Activated T-helper 1 cell treated with anti-CD3 and anti-CD28 coated beads, Interleukin-12 subunit alpha, Interleukin-12 subunit beta, Interleukin-2, Interleukin-4 antibody, amounts not matched to agents 30 ng/mL and 10 ng/mL and 1 ng/mL, durations not matched to agents 14 hours and 24 hours and 36 hours (primary cell): ENCODE measurements at regions of chr17 and their contacts with region 1.

Region 1: GRCh38 chr17:5097101-5097834 is 14.4 kb downstream of the ZNF232 start:
- DNase-seq: no peak
- H3K4me3 Mint-ChIP-seq: no peak overlapping the region
- H3K27ac Mint-ChIP-seq: no peak overlapping the region
- H3K4me1 Mint-ChIP-seq: no peaks in the 10 kb centered on the region
- H3K27me3 Mint-ChIP-seq: peaks cover 7% of the 10 kb centered on the region

Region 2: DNA sequence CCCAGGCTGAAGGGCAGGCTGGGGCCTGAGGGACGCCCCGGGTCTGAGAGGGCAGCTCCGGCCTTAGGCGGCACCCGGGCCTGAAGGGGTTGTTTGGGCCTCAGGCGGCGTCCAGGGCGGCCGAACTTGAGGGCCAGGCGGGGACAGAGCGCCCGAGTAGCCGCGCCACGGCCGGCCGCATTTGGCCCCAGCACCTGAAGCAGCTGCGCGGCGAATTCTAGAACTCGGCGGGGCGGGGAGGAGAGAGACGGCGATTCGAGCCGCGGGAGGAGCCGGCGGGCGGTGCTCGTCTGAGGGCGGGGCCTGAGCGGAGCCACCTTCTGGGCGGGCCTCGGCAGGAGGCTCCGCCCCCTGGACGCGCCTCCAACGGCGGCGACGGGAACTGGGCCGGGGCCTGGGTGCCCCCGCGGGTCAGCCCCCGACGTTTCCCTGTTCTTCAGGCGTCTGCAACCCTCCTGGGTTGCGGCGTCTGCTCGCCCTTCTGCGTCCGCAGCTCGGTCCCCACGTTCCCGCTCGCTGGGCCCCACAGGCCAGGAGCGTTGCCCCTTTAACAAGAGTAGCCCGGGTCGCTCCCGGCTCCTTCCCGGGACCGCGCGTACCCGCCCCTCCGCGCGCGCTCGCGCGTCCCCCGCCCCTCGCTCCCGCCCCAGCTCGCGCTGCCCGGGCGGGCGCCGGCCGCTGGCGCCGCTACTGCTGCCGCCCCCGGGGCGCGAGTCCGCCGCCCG is 99.8 kb before region 1 on chr17 and contains the starts of genes INCA1 and KIF1C:
- intact Hi-C with region 1: no loop called
- DNase-seq: peak; percentile 89
- H3K4me3 Mint-ChIP-seq: peak within 1 kb of the TSS; percentile 90
- H3K27ac Mint-ChIP-seq: peak within 1 kb of the TSS; percentile 90
- H3K4me1 Mint-ChIP-seq: peaks cover 19% of the 10 kb centered on the region
- H3K27me3 Mint-ChIP-seq: peaks cover 8% of the 10 kb centered on the region
- total RNA-seq, gene INCA1: 0.34 and 0.37 TPM in 2 replicates
- total RNA-seq, gene KIF1C: 68.4 and 71.3 TPM in 2 replicates

Region 3: GRCh38 chr17:5179003-5179402 is 81.7 kb after region 1 on chr17:
- intact Hi-C with region 1: loop called (anchors 5 kb)
- DNase-seq: no peak
- H3K4me3 Mint-ChIP-seq: no peak overlapping the region
- H3K27ac Mint-ChIP-seq: no peak overlapping the region
- H3K4me1 Mint-ChIP-seq: no peaks in the 10 kb centered on the region
- H3K27me3 Mint-ChIP-seq: no peaks in the 10 kb centered on the region